Sigmoid colon (tissue), 7 donors: ENCODE measurements at regions of chr2 and their contacts with region 1.

Region 1: GRCh38 chr2:197515739-197516392 is at the start of gene MOB4:
- DNase-seq: peak; percentile 97
- H3K4me3 ChIP-seq: peak within 1 kb of the TSS; percentile 66 to 90 (median 89)
- H3K27ac ChIP-seq: peak within 1 kb of the TSS; percentile 91 to 96 (median 92)
- H3K4me1 ChIP-seq: peaks cover 0 to 31% (median 23%) of the 10 kb centered on the region in 4 donors
- H3K27me3 ChIP-seq: no peaks in the 10 kb centered on the region
- CTCF ChIP-seq: no peak
- EP300 ChIP-seq: peak in 2 of 4 donors; percentile 32 to 38
- POLR2A ChIP-seq: peak; percentile 82 to 90
- total RNA-seq, gene MOB4: 29.1 to 50.5 (median 38.7) TPM

Region 2: DNA sequence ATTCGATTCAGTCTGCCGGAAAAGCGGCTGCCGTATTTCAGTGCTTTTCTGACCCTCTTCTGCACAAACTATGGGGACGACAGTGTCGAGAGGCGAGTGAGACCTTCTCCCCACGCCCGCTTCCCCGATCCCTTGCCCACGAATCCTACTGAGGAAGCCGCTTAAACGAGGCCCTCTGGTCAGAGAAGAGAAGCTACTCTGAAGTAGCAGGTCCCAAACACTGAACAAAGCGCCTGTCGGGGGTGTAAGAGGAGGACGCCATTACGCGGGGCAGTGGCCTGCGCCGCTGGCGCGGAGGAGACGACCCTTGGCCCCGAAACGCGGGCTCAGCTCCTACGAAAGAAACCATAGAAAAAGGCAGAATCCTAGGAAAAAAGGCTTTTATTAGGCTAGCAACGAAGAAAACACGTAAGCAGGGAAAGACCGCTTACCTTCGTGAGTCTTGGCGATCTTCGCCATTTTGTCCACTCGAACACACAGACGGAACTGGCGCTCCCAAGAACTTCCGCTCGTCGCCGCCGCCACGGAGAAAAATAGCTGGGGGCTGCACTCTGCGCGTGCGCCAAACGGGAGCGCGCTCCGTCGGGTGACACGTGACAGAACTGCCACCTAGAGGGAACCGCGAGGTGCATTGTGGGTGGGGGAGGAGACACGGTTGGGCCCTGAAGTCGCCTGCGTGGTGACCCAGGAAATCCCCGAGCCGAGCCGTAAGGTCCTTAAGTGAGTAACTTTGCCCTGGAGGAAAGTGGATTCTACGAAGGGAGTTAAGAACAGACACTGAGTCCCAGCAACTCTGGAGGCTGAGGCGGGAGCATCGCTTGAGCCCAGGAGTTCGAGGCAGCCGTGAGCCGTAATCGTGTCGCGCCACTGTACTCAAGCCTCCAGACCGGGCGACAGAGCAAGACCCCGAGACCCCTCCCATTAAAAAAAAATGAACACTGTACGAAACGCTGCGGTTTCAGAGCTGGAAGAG is 81.0 kb before region 1 on chr2 and contains the start of gene SF3B1:
- intact Hi-C with region 1: loop called (anchors 5 kb)
- DNase-seq: peak; percentile 99
- H3K4me3 ChIP-seq: peak within 1 kb of the TSS; percentile 86 to 98 (median 92)
- H3K27ac ChIP-seq: peak within 1 kb of the TSS; percentile 91 to 98 (median 97)
- H3K4me1 ChIP-seq: peaks cover 0 to 50% (median 45%) of the 10 kb centered on the region in 4 donors
- H3K27me3 ChIP-seq: no peaks in the 10 kb centered on the region
- CTCF ChIP-seq: no peak
- EP300 ChIP-seq: peak in 1 of 4 donors; percentile 82
- POLR2A ChIP-seq: peak; percentile 90 to 93
- total RNA-seq, gene SF3B1: 258 to 475 (median 332) TPM

Region 3: DNA sequence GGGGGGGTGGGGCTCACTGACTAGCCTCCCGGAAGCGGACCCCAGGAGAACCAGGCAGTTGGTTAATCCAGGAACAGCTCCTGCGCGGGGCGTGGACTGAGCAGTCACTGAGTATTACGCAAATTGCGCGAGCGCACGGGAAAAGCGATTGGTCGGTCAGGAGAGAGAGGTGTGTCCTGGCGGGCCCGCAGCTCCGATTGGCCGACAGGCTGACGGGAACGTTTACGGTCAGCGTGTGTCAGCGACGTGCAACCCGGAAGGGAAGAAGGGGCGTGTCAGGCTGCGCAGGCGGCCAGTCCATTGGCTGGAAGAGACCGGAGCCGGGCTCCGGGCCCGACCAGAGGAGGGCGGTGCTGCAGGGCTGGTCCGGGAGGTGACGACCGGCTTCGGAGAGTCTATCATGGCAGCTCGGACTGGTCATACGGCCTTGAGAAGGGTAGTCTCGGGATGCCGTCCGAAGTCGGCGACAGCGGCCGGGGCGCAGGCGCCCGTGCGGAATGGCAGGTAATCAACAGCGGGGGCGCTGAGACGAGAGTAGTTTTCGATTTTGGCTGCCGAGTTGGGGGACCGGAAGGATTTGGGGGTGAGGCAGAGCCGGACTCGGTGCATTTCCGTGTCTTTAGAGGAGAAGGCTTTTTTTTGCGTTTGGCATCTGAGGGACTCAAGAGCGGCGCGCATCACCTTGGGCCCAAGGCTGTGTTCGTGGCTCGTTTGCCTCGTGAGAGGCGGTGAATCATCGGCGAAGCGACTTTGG is 62.5 kb before region 1 on chr2 and contains the start of gene COQ10B:
- intact Hi-C with region 1: loop called (anchors 5 kb)
- DNase-seq: peak; percentile 100
- H3K4me3 ChIP-seq: peak within 1 kb of the TSS; percentile 72 to 99 (median 93)
- H3K27ac ChIP-seq: peak within 1 kb of the TSS; percentile 97 to 100 (median 99)
- H3K4me1 ChIP-seq: peaks cover 0 to 20% (median 18%) of the 10 kb centered on the region in 4 donors
- H3K27me3 ChIP-seq: no peaks in the 10 kb centered on the region
- CTCF ChIP-seq: peak in 1 of 4 experiments; percentile 10
- EP300 ChIP-seq: peak in 1 of 4 donors; percentile 41
- POLR2A ChIP-seq: peak; percentile 86 to 89
- total RNA-seq, gene COQ10B: 16.3 to 39.0 (median 33.0) TPM

Region 4: DNA sequence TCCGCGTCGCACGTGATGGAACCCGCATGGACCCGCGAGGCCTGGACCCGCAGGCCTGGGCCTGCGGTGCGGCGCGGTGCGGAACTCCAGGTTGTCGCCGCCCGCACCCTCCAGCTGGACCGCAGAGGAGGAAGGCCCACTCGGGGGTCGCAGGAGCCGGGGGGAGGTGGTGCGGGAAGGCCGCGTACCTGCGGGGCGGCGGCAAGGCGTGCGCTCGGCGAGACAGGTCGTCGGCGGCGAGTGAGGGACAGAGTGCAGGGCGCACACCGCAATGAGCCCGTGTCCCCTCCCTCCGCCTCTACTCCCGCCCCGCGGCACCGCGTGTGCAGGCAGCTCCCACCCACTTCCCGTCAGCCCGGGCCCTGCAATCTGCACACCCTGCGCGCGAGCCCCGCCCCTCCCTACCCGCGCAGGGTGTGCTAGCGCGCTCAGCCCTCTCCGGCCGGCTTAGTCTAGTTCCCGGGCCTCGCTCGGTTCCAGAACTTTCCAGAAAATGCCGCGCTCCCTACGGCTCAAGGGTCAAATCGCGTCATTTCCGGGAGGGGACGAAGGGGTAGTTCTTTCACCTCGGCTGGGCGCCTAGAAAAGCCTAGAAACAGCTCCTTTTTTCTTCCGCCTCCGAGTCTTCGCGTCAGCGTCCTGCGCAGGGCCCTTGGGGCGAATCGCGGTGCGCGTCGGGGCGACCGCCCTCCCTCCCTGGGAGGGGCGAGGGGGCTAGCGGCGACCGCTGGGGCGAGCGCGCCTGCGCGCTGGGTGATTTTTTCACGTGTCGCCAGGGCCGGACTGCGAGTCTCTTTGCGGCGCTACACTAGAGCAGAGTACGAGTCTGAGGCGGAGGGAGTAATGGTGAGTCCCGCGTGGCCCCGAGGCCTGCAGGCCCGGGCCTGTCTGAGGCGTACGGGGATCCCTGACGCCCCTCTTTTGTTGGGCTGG is 16.0 kb before region 1 on chr2 and contains the starts of genes HSPD1 and HSPE1:
- intact Hi-C with region 1: loop called (anchors 2 kb)
- DNase-seq: peak; percentile 99
- H3K4me3 ChIP-seq: peak within 1 kb of the TSS; percentile 76 to 95 (median 84)
- H3K27ac ChIP-seq: peak within 1 kb of the TSS; percentile 95 to 96 (median 96)
- H3K4me1 ChIP-seq: peaks cover 0 to 55% (median 43%) of the 10 kb centered on the region in 4 donors
- H3K27me3 ChIP-seq: no peaks in the 10 kb centered on the region
- CTCF ChIP-seq: no peak
- EP300 ChIP-seq: peak; percentile 61 to 97 (median 74)
- POLR2A ChIP-seq: peak; percentile 86 to 92
- total RNA-seq, gene HSPD1: 98.9 to 144 (median 114) TPM
- total RNA-seq, gene HSPE1: 47.8 to 136 (median 106) TPM

Region 5: GRCh38 chr2:197705121-197705911 is 189.4 kb after region 1 on chr2 and contains the start of gene MARS2:
- intact Hi-C with region 1: loop called (anchors 5 kb)
- DNase-seq: peak; percentile 96
- H3K4me3 ChIP-seq: peak within 1 kb of the TSS; percentile 68 to 92 (median 76)
- H3K27ac ChIP-seq: peak within 1 kb of the TSS; percentile 77 to 87 (median 81)
- H3K4me1 ChIP-seq: peaks cover 0 to 40% (median 37%) of the 10 kb centered on the region in 4 donors
- H3K27me3 ChIP-seq: no peaks in the 10 kb centered on the region
- CTCF ChIP-seq: no peak
- EP300 ChIP-seq: no peak
- POLR2A ChIP-seq: peak; percentile 10 to 18
- total RNA-seq, gene MARS2: 3.1 to 6.6 (median 4.5) TPM

Region 6: DNA sequence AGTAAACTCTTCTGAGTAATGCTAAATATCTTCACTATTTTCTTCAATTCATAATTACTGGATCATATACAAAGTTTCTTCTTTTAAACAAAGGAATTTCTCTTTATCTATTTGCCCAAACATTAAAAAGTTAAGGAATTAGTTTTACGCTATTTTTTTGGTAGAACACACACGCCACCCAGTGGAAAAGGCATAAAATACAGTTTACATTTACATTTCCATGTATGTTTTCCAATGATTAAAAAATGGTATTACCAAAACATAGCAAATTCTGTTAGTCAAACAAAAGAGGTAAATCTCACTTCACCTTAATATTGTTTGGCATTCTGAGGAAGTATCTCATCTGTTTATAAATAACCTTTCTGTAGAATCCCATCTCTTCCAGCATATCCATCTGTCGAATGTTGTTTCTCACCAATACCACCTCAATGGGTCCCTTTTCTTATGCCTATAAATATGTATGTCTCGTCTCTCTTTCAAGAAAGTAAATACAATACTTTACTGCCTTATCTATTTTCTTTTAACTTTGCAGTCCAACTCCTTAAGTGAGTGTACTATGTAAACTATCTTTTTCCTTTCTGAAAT is 262.0 kb after region 1 on chr2:
- intact Hi-C with region 1: loop called (anchors 5 kb)
- DNase-seq: no peak
- H3K4me3 ChIP-seq: no peak overlapping the region
- H3K27ac ChIP-seq: no peak overlapping the region
- H3K4me1 ChIP-seq: no peaks in the 10 kb centered on the region
- H3K27me3 ChIP-seq: no peaks in the 10 kb centered on the region
- CTCF ChIP-seq: peak; percentile 34 to 68 (median 50)
- EP300 ChIP-seq: no peak
- POLR2A ChIP-seq: no peak

Region 7: GRCh38 chr2:199459286-199460016 is 1943.6 kb after region 1 on chr2:
- intact Hi-C with region 1: loop called (anchors 5 kb)
- DNase-seq: peak; percentile 96
- H3K4me3 ChIP-seq: peak overlapping the region; percentile 69 to 88 (median 78)
- H3K27ac ChIP-seq: peak overlapping the region; percentile 75 to 84 (median 76)
- H3K4me1 ChIP-seq: peaks cover 0 to 64% (median 59%) of the 10 kb centered on the region in 4 donors
- H3K27me3 ChIP-seq: peaks cover 64 to 86% (median 73%) of the 10 kb centered on the region in 3 donors
- CTCF ChIP-seq: no peak
- EP300 ChIP-seq: no peak
- POLR2A ChIP-seq: no peak